ACHN (cell line): ENCODE measurements at regions of chr3 and their contacts with region 1.

Region 1: GRCh38 chr3:102229062-102229655 is 205.7 kb upstream of the ZPLD1 start:
- DNase-seq: peak; percentile 77

Region 2: DNA sequence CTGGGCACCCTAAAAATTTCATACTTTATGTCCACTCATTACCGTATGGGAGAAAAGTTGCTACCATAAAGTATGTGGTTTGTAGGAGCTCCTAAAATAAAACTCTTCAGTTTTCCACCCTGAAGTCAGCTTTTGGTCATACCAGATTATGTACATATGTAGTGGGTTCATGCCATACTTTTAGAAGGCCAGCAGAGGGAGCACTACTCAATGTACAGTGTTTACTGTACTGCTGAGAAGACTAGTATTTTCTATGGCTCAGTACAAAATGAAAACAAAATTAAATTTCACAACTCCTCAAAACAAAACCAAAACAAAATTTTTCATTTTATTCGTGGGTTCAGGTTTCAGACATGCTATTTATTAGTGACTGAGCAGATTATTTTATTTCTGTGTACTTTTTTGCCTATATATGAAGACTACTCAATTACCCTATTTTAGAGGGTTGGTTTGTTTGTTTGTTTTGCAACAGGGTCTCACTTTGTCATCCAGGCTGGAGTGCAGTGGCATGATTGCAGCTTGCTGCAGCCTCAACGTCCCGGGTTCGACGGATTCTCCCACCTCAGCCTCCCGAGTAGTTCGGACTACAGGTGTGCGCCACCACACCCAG is 425.9 kb before region 1 on chr3:
- in situ Hi-C with region 1: loop called (anchors 25 kb)
- DNase-seq: peak; percentile 75

Region 3: GRCh38 chr3:102536456-102536855 is 307.3 kb after region 1 on chr3:
- in situ Hi-C with region 1: loop called (anchors 25 kb)
- DNase-seq: peak; percentile 63